Heart right ventricle (tissue), 16 donors: ENCODE measurements at regions of chr16 and their contacts with region 1.

Region 1: GRCh38 chr16:51002881-51003490 is 148.1 kb downstream of the SALL1 start:
- DNase-seq: peak in 1 of 2 donors; percentile 12
- ATAC-seq: peak in 6 of 8 donors; percentile 18 to 70 (median 31)
- H3K4me3 ChIP-seq: no peak overlapping the region
- H3K27ac ChIP-seq: no peak overlapping the region
- H3K4me1 ChIP-seq: no peaks in the 10 kb centered on the region
- H3K27me3 ChIP-seq: peaks cover 0 to 6% (median 0%) of the 10 kb centered on the region in 7 donors
- CTCF ChIP-seq: no peak

Region 2: DNA sequence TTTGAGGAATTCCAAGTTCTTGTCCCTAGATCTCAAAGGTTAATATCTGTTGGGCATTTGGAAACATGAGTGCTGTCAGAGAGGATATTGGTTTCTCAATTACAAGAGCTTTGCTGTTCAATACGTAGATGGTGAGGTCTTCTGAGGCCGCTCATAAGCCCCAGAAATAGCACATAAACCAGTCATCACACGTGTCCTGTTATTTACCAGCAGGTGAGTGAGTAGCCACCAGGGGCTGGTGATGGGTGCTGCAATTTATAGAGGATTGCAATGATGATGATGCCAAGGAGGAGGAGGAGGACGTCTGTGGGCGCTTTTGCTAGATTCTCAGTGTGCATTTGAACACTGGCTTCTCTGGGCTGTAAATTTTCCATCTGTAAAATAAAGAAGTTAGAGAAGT is 59.1 kb after region 1 on chr16:
- intact Hi-C with region 1: loop called in 1 of 10 experiments (anchors 10 kb)
- DNase-seq: no peak
- ATAC-seq: no peak
- H3K4me3 ChIP-seq: no peak overlapping the region
- H3K27ac ChIP-seq: no peak overlapping the region
- H3K4me1 ChIP-seq: no peaks in the 10 kb centered on the region
- H3K27me3 ChIP-seq: peaks cover 0 to 18% (median 0%) of the 10 kb centered on the region in 7 donors
- CTCF ChIP-seq: no peak